PC-3 (cell line): ENCODE measurements at regions of chr10 and their contacts with region 1.

Region 1: GRCh38 chr10:22427890-22428571 is 82.7 kb downstream of the SPAG6 start:
- DNase-seq: peak; percentile 87
- ATAC-seq: peak; percentile 79
- H3K4me3 ChIP-seq: peak overlapping the region; percentile 57
- H3K27ac ChIP-seq: peak overlapping the region; percentile 95
- H3K4me1 ChIP-seq: peaks cover 43% of the 10 kb centered on the region
- H3K27me3 ChIP-seq: no peaks in the 10 kb centered on the region
- CTCF ChIP-seq: no peak

Region 2: GRCh38 chr10:22244001-22244400 is 184.0 kb before region 1 on chr10:
- CTCF ChIA-PET with region 1: no interaction called
- POLR2A ChIA-PET with region 1: no interaction called
- intact Hi-C with region 1: loop called (anchors 5 kb)
- DNase-seq: no peak
- ATAC-seq: no peak
- H3K4me3 ChIP-seq: peak overlapping the region; percentile 25; the same call in 1 of the 2 replicates
- H3K27ac ChIP-seq: peak overlapping the region; percentile 99
- H3K4me1 ChIP-seq: peaks cover 61% of the 10 kb centered on the region
- H3K27me3 ChIP-seq: no peaks in the 10 kb centered on the region
- CTCF ChIP-seq: peak; percentile 49

Region 3: DNA sequence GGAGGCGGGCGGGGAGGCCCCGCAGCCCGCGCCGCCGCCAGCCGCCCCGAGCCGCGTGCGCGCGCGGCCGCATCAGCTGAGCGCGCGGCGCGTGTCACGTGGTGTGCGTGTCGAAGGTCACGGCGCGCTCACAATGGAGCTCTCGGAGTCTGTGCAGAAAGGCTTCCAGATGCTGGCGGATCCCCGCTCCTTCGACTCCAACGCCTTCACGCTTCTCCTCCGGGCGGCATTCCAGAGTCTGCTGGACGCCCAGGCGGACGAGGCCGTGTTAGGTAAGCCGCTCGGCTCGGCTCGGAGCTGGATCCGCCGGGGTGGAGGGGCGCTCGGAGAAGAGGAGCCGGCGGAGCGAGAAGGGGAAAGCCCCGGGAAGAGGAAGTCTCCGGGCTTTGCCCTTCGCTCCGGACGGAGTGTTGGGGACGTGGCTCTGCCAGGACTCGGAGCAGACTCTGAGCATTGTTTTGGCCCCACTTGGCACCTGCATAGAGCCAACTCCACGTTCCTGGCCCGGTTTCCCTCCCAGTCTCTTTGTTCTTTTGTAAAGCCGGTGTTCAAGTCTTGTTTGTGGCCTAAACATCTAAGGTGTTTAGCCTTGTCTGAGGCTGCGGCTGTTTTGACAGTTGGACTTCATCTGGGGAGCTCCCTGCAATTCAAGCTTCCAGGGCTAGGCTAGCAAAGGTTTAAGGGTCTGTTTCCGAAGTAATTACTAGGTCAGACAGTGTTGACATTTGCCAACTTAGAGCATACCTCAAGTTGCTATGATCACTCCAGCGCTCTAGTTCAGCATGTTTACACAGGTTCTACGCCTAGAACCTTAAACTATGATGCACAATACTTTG is 111.5 kb before region 1 on chr10 and contains the start of gene COMMD3:
- CTCF ChIA-PET with region 1: no interaction called
- POLR2A ChIA-PET with region 1: no interaction called
- intact Hi-C with region 1: loop called (anchors 5 kb)
- DNase-seq: peak; percentile 82
- ATAC-seq: peak; percentile 50
- H3K4me3 ChIP-seq: peak within 1 kb of the TSS; percentile 92
- H3K27ac ChIP-seq: peak within 1 kb of the TSS; percentile 99
- H3K4me1 ChIP-seq: peaks cover 37% of the 10 kb centered on the region
- H3K27me3 ChIP-seq: no peaks in the 10 kb centered on the region
- CTCF ChIP-seq: no peak
- total RNA-seq, gene COMMD3: 86.4 and 86.6 TPM in 2 replicates

Region 4: DNA sequence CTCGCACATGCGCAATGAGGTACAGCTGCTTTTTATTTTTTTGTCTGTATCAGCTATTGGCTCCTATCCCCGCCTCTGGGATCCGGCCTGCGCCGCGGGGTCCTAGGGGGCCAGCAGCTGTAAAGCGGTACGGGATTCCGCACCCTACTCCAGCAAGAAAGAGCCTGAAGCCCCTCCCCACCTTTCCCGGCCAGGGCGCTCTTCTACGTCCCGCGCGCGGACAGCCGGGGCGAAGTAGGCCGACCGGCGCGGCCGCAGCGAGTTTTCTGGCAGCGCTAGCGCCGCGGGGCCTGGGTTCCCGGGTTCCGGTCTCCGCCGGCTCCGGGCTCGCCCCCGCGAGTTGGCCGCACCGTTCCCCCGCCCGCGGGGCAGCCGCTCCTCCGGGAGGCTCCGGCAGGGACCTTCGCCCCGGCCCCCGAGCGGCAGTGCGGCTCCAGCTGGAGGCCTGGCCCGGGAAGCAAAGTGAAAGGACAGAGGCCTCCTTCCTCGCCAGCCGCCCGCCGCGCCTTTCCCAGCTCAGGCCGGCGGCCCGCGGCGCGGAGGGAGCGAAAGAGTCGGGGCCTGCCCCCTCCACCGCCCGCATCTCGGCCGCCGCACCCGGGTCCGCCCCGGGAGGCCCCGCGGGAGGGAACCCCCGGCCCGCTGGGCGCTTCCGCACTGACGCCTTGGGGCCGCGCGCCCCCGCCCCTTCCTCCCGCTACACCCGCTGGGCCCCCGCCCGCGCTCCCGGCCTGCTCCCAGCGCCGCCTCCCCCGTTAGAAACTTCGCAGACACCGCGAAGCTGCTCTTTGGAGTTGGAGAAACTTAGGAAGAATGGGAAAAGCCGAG is 87.5 kb before region 1 on chr10:
- CTCF ChIA-PET with region 1: no interaction called
- POLR2A ChIA-PET with region 1: interaction called, 7 read pairs
- intact Hi-C with region 1: loop called (anchors 5 kb)
- DNase-seq: peak; percentile 54
- ATAC-seq: peak; percentile 72
- H3K4me3 ChIP-seq: peak overlapping the region; percentile 91
- H3K27ac ChIP-seq: peak overlapping the region; percentile 89
- H3K4me1 ChIP-seq: peaks cover 22% of the 10 kb centered on the region
- H3K27me3 ChIP-seq: no peaks in the 10 kb centered on the region
- CTCF ChIP-seq: no peak

Region 5: GRCh38 chr10:22573820-22574569 is 146.0 kb after region 1 on chr10:
- CTCF ChIA-PET with region 1: no interaction called
- POLR2A ChIA-PET with region 1: no interaction called
- intact Hi-C with region 1: no loop called
- DNase-seq: peak; percentile 44
- ATAC-seq: no peak
- H3K4me3 ChIP-seq: no peak overlapping the region
- H3K27ac ChIP-seq: no peak overlapping the region
- H3K4me1 ChIP-seq: no peaks in the 10 kb centered on the region
- H3K27me3 ChIP-seq: no peaks in the 10 kb centered on the region
- CTCF ChIP-seq: peak; percentile 72

Region 6: DNA sequence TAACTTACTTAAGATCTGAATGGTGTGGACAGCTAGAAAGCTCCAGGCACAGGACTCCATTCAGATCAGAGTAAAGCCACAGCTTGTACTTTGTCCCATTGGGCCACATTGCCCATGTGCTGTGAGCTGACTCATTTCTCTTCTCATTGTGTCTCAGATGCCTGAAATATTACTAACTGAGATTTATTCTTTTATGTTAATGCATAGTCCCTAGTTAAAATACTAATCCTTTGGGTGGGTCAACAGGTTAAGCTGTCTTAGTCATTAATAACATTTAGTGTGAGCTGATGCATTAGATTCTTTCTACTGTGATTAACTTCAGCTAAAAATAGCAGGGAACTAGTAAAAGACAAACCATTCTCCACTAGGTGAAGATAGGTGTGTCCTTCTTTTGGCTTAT is 395.1 kb after region 1 on chr10:
- CTCF ChIA-PET with region 1: no interaction called
- POLR2A ChIA-PET with region 1: no interaction called
- intact Hi-C with region 1: loop called (anchors 2 kb)
- DNase-seq: peak; percentile 90
- ATAC-seq: peak; percentile 85
- H3K4me3 ChIP-seq: no peak overlapping the region
- H3K27ac ChIP-seq: peak overlapping the region; percentile 89
- H3K4me1 ChIP-seq: peaks cover 50% of the 10 kb centered on the region
- H3K27me3 ChIP-seq: no peaks in the 10 kb centered on the region
- CTCF ChIP-seq: no peak